H1 (cell line): ENCODE measurements at regions of chr1 and their contacts with region 1.

Region 1: GRCh38 chr1:205056188-205056611 is 13.2 kb downstream of the CNTN2 start:
- DNase-seq: no peak
- H3K4me3 ChIP-seq: no peak overlapping the region
- H3K27ac ChIP-seq: no peak overlapping the region
- H3K4me1 ChIP-seq: no peaks in the 10 kb centered on the region; a peak in 2 of 7 replicates
- H3K27me3 ChIP-seq: no peaks in the 10 kb centered on the region
- CTCF ChIP-seq: no peak
- EP300 ChIP-seq: no peak
- POLR2A ChIP-seq: no peak
- RAD21 ChIP-seq: no peak

Region 2: DNA sequence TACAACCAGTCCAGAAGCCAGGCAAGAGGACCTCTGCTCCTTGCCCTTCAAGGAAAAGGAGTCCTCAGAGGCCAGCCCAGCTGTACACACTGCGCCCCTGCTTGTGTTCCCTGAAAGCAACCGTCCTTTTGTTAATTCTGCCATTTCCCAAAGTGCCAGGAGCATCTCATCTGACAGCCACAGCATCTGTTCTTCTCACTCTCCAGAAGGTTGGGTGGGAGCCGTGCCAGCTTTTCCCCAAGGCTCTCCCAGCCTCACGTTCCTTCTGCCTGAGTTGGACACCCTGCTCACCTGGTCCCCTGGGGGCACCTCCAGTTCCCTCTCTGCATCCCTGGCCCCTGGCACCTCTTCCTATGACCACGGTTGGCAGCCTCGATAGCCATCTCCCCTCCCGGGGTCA is 23.7 kb before region 1 on chr1:
- CTCF ChIA-PET with region 1: interaction called, 71 read pairs
- POLR2A ChIA-PET with region 1: no interaction called
- DNase-seq: no peak
- H3K4me3 ChIP-seq: no peak overlapping the region
- H3K27ac ChIP-seq: no peak overlapping the region
- H3K4me1 ChIP-seq: peaks cover 0 to 7% (median 3%) of the 10 kb centered on the region in 4 experiments; a peak in 4 of 7 replicates
- H3K27me3 ChIP-seq: no peaks in the 10 kb centered on the region
- CTCF ChIP-seq: no peak
- EP300 ChIP-seq: no peak
- POLR2A ChIP-seq: no peak
- RAD21 ChIP-seq: no peak

Region 3: DNA sequence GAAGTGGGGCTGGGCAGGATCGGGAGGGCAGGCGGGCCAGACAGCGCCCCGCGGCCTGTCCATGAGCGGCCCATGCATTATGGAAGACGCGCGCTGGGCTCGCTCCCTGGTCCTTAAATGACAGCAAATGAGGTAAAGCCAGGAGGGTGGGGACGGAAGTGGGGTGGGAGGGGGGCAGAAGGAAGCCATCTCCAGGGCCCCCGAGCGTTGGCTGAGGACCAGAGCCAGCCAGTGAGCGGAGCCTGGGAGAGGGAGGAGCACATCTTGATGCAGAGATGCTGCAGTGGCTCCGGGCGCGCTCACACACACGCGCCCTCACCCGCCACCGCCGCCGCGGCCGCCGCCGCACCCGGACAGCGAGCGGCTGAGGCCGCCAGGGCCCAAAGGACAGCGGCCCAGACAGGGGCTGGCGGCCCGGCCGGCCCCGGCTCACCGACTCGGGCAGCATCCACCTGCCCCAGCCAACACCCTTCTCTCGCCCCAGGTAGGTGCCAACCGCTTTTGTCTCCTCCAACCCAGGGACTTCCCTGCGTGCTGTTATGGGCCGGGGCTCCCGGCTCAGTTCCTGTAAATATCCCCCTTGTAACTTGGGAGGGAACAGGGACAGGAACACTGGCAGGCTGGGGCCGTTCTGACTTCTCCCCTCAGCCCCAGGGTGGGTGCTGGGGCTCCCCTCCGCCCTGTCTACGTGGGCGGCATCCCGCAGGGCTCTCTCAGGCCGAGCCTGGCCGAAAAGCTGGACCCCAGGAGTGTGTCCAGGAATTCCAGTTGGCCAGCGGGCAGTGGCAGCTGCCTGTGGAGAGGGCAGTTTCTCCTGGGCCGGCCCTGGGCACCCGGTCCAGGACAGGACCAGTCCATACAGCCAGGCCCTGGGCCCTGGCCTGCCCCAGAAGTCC is 13.0 kb before region 1 on chr1 and contains the start of gene CNTN2:
- CTCF ChIA-PET with region 1: interaction called, 102 read pairs
- POLR2A ChIA-PET with region 1: interaction called, 3 read pairs
- DNase-seq: peak in 1 of 2 experiments; percentile 75
- H3K4me3 ChIP-seq: peak within 1 kb of the TSS; percentile 1 to 56 (median 34); a peak in 5 of 8 replicates
- H3K27ac ChIP-seq: no peak within 1 kb of the TSS
- H3K4me1 ChIP-seq: peaks cover 13 to 27% (median 16%) of the 10 kb centered on the region in 4 experiments
- H3K27me3 ChIP-seq: peaks cover 0 to 32% (median 18%) of the 10 kb centered on the region in 4 experiments; a peak in 5 of 7 replicates
- CTCF ChIP-seq: no peak
- EP300 ChIP-seq: no peak
- POLR2A ChIP-seq: no peak
- RAD21 ChIP-seq: no peak
- total RNA-seq, gene CNTN2: 3.9 TPM in 2 replicates